Panc1 (cell line): ENCODE measurements at regions of chr3 and their contacts with region 1.

Region 1: GRCh38 chr3:169772305-169772896 is 795 bp upstream of the MYNN start:
- DNase-seq: peak; percentile 80
- ATAC-seq: peak; percentile 78
- H3K4me3 ChIP-seq: peak overlapping the region; percentile 90 to 98
- H3K27ac ChIP-seq: peak overlapping the region; percentile 97
- H3K4me1 ChIP-seq: peaks cover 9% of the 10 kb centered on the region
- H3K27me3 ChIP-seq: no peaks in the 10 kb centered on the region
- CTCF ChIP-seq: no peak

Region 2: DNA sequence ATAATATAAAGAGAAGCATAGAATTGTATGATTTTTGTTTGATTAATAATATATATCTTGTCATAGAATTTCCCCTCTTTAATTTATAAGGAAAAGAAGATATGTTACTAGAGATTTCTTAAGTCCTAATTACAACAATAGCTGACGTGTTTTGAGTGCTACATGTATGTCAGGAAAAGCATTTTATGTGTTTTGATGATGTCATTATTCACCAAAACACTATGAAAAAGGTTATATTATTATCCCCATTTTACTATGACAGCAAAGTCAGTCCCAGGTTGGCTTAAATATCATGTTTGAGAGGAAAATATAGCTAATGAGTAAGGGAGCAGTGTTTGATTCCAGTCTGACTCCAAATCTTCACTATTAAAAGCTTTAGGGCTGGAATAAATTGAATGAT is 1248.3 kb before region 1 on chr3:
- CTCF ChIA-PET with region 1: no interaction called
- POLR2A ChIA-PET with region 1: no interaction called
- in situ Hi-C with region 1: no loop called
- intact Hi-C with region 1: no loop called
- DNase-seq: no peak
- ATAC-seq: no peak
- H3K4me3 ChIP-seq: no peak overlapping the region
- H3K27ac ChIP-seq: no peak overlapping the region
- H3K4me1 ChIP-seq: no peaks in the 10 kb centered on the region
- H3K27me3 ChIP-seq: no peaks in the 10 kb centered on the region
- CTCF ChIP-seq: no peak

Region 3: GRCh38 chr3:170049146-170050072 is 277.0 kb after region 1 on chr3:
- CTCF ChIA-PET with region 1: no interaction called
- POLR2A ChIA-PET with region 1: interaction called, 11 read pairs
- in situ Hi-C with region 1: no loop called
- intact Hi-C with region 1: no loop called
- DNase-seq: no peak
- ATAC-seq: peak; percentile 31; the same call in 1 of the 2 replicates
- H3K4me3 ChIP-seq: no peak overlapping the region
- H3K27ac ChIP-seq: no peak overlapping the region
- H3K4me1 ChIP-seq: no peaks in the 10 kb centered on the region
- H3K27me3 ChIP-seq: peaks cover 5% of the 10 kb centered on the region; the same call in 1 of the 2 replicates
- CTCF ChIP-seq: no peak

Region 4: GRCh38 chr3:170089862-170090600 is 317.6 kb after region 1 on chr3:
- CTCF ChIA-PET with region 1: no interaction called
- POLR2A ChIA-PET with region 1: interaction called, 13 read pairs
- in situ Hi-C with region 1: no loop called
- intact Hi-C with region 1: no loop called
- DNase-seq: no peak
- ATAC-seq: no peak
- H3K4me3 ChIP-seq: no peak overlapping the region
- H3K27ac ChIP-seq: no peak overlapping the region
- H3K4me1 ChIP-seq: no peaks in the 10 kb centered on the region
- H3K27me3 ChIP-seq: no peaks in the 10 kb centered on the region
- CTCF ChIP-seq: no peak